Tibial artery (tissue), 4 donors: ENCODE measurements at regions of chr3 and their contacts with region 1.

Region 1: DNA sequence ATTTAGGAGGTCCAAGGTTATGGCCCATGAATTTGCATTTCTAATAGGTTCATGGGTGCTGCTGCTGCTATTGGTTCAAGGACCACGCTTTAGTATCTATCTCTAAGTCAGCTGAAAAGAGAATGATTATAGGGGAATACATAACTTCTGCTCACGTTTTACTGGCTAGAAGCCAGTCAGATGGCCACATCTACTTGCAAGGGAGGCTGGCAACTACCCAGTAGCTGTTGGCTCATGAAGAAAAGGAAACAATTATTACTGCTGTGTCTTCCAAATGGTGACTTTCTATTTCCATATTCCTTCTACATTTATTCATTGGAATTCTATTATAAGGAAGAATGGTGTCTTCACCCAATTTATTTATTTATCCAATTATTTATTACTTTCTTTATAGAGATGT is 54.2 kb downstream of the SLC25A36 start:
- DNase-seq: no peak
- H3K4me3 ChIP-seq: no peak overlapping the region
- H3K27ac ChIP-seq: no peak overlapping the region
- H3K4me1 ChIP-seq: no peaks in the 10 kb centered on the region
- H3K27me3 ChIP-seq: no peaks in the 10 kb centered on the region
- CTCF ChIP-seq: no peak

Region 2: GRCh38 chr3:140636406-140637130 is 359.3 kb before region 1 on chr3:
- intact Hi-C with region 1: no loop called
- DNase-seq: no peak
- H3K4me3 ChIP-seq: no peak overlapping the region
- H3K27ac ChIP-seq: no peak overlapping the region
- H3K4me1 ChIP-seq: peaks cover 0 to 3% (median 0%) of the 10 kb centered on the region in 4 donors
- H3K27me3 ChIP-seq: no peaks in the 10 kb centered on the region
- CTCF ChIP-seq: no peak

Region 3: GRCh38 chr3:141192345-141192744 is 196.5 kb after region 1 on chr3:
- intact Hi-C with region 1: loop called (anchors 5 kb)
- DNase-seq: peak; percentile 97 to 99
- H3K4me3 ChIP-seq: no peak overlapping the region
- H3K27ac ChIP-seq: no peak overlapping the region
- H3K4me1 ChIP-seq: no peaks in the 10 kb centered on the region
- H3K27me3 ChIP-seq: peaks cover 0 to 13% of the 10 kb centered on the region in 2 donors
- CTCF ChIP-seq: peak; percentile 96 to 99